ENCODE measurements at regions of chr14 and their contacts with region 1.

Region 1: GRCh38 chr14:77314043-77314442 is 6.6 kb downstream of the POMT2 start:
- DNase-seq: no peak
- ATAC-seq: no peak
- H3K4me3 Mint-ChIP-seq: no peak overlapping the region
- H3K27ac Mint-ChIP-seq: no peak overlapping the region
- H3K4me1 Mint-ChIP-seq: peaks cover 4% of the 10 kb centered on the region
- H3K27me3 Mint-ChIP-seq: no peaks in the 10 kb centered on the region

Region 2: GRCh38 chr14:77141214-77142004 is 172.6 kb before region 1 on chr14 and contains the start of gene ZDHHC22:
- CTCF ChIA-PET with region 1: interaction called, 15 read pairs
- POLR2A ChIA-PET with region 1: no interaction called
- DNase-seq: no peak
- ATAC-seq: peak; percentile 52
- H3K4me3 Mint-ChIP-seq: no peak within 1 kb of the TSS
- H3K27ac Mint-ChIP-seq: no peak within 1 kb of the TSS
- H3K4me1 Mint-ChIP-seq: peaks cover 16% of the 10 kb centered on the region
- H3K27me3 Mint-ChIP-seq: peaks cover 73% of the 10 kb centered on the region
- total RNA-seq, gene ZDHHC22: not detected

Region 3: GRCh38 chr14:77189479-77189878 is 124.6 kb before region 1 on chr14:
- CTCF ChIA-PET with region 1: no interaction called
- POLR2A ChIA-PET with region 1: no interaction called
- DNase-seq: no peak
- ATAC-seq: no peak
- H3K4me3 Mint-ChIP-seq: no peak overlapping the region
- H3K27ac Mint-ChIP-seq: no peak overlapping the region
- H3K4me1 Mint-ChIP-seq: peaks cover 3% of the 10 kb centered on the region
- H3K27me3 Mint-ChIP-seq: peaks cover 14% of the 10 kb centered on the region

Region 4: GRCh38 chr14:77290741-77291140 is 23.3 kb before region 1 on chr14:
- CTCF ChIA-PET with region 1: interaction called, 12 read pairs
- POLR2A ChIA-PET with region 1: no interaction called
- DNase-seq: no peak
- ATAC-seq: no peak
- H3K4me3 Mint-ChIP-seq: no peak overlapping the region
- H3K27ac Mint-ChIP-seq: no peak overlapping the region
- H3K4me1 Mint-ChIP-seq: no peaks in the 10 kb centered on the region
- H3K27me3 Mint-ChIP-seq: no peaks in the 10 kb centered on the region

Region 5: DNA sequence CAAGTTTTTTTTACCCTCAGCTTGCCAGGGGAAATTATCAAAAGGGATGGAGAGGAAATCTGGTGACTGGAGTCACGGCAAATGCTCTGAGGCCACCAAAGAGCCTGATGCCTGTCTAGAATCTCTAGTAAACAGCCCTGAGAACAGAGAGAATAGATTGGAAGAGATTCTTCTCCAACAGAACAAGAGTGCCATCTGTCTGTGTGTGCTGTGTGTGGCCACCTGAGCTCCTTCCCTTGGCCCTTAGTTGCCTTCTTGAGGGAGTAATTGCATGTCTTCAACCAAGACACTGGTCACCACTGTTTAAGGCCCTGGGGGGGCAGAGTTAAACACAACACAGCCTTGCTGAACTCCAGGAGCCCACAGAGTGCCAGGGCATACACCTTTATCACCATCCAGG is 12.1 kb after region 1 on chr14:
- CTCF ChIA-PET with region 1: interaction called, 18 read pairs
- POLR2A ChIA-PET with region 1: no interaction called
- DNase-seq: no peak
- ATAC-seq: no peak
- H3K4me3 Mint-ChIP-seq: no peak overlapping the region
- H3K27ac Mint-ChIP-seq: no peak overlapping the region
- H3K4me1 Mint-ChIP-seq: peaks cover 11% of the 10 kb centered on the region
- H3K27me3 Mint-ChIP-seq: no peaks in the 10 kb centered on the region

Region 6: DNA sequence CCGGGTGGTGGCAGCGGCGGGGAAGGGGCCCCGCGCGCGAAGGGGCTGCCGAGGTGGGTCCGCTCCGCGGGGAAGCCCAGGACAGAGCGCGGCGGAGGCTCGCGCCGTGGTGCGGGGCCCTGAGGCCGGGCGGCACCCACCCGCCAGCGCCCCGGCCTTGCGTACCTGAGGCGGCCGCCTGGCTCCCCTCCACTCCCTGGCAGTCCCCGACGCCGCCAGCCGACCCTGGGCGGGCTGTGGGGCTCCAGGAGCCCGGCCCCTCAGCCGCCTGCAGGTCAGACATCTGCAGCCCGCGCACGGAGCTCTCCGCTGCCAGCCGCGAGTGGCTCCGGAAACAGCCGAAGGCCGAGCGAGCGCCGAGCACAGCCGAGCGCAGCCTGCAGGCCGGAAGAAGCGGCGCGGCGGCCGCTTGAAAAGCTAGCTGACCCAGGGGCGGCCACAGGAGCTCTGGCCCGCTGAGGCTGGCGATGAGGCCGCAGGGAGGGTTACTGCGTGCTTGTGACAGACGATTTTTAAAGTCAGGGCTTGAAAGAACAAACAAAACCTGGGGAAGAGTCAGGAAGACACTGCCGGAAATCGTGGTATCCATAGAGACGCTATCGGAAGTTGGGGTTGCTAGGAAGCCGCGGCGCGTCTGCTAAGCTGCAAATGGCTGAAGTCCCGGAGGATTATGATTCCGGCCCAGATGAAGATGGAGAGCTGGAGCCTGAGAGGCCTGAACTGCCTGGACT is 62.9 kb after region 1 on chr14 and contains the starts of genes SAMD15 and TMED8:
- CTCF ChIA-PET with region 1: interaction called, 12 read pairs
- POLR2A ChIA-PET with region 1: interaction called, 3 read pairs
- DNase-seq: peak; percentile 87
- ATAC-seq: peak; percentile 98
- H3K4me3 Mint-ChIP-seq: peak within 1 kb of the TSS; percentile 89
- H3K27ac Mint-ChIP-seq: peak within 1 kb of the TSS; percentile 92
- H3K4me1 Mint-ChIP-seq: peaks cover 38% of the 10 kb centered on the region
- H3K27me3 Mint-ChIP-seq: peaks cover 5% of the 10 kb centered on the region
- total RNA-seq, gene SAMD15: 0.23 to 0.40 TPM
- total RNA-seq, gene TMED8: 16.7 to 17.1 TPM

Measured in activated CD8-positive, alpha-beta T cell treated with anti-CD3 and anti-CD28 coated beads, Interleukin-2, amount 10 ng/mL, durations not matched to agents 7 days and 5 days (primary cell).